GM12878 (cell line): ENCODE measurements at regions of chr14 and their contacts with region 1.

Region 1: DNA sequence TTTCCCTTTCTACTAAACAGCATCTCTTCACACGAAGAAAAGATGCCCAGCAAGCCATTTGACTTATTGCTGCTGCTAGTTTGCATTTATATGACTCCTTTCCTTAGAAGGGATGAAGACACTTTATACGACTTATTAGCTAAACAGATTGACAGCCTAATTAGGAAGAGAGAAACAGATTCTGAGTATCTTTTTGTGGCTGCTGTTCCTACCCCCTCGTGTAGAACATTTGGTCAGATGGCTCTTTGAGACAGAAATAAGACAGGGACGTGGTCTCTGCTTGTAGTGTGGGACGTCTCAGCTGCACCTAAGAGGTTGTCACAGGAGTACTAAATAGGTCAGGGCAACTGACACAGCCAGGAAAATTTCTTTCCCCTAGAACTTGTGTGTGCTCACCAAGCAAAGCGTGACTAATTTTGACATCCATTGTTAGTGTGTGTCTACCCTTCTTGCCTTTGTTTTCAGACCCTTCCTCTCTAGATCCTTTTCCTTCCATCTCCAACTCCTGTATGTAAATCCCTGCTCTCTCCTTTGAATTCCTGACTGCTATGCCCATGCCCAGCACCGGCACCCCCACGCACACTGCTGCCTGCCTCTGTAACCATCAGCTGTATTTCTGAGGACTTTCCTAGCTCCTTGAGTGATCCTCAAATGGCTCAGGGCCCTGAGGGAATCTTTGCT is 83.2 kb downstream of the DAD1 start:
- DNase-seq: no peak
- ATAC-seq: peak; percentile 29
- H3K4me3 ChIP-seq: peak overlapping the region; percentile 68
- H3K27ac ChIP-seq: peak overlapping the region; percentile 98
- H3K4me1 ChIP-seq: peaks cover 50% of the 10 kb centered on the region
- H3K27me3 ChIP-seq: no peaks in the 10 kb centered on the region
- CTCF ChIP-seq: no peak
- EP300 ChIP-seq: peak in 1 of 2 experiments; percentile 49; a peak in 1 of 4 replicates
- POLR2A ChIP-seq: peak; percentile 60; the same call in 1 of the 2 replicates
- RAD21 ChIP-seq: 0 out of 2 replicates have a peak, but pooled peaks have one; percentile 8

Region 2: DNA sequence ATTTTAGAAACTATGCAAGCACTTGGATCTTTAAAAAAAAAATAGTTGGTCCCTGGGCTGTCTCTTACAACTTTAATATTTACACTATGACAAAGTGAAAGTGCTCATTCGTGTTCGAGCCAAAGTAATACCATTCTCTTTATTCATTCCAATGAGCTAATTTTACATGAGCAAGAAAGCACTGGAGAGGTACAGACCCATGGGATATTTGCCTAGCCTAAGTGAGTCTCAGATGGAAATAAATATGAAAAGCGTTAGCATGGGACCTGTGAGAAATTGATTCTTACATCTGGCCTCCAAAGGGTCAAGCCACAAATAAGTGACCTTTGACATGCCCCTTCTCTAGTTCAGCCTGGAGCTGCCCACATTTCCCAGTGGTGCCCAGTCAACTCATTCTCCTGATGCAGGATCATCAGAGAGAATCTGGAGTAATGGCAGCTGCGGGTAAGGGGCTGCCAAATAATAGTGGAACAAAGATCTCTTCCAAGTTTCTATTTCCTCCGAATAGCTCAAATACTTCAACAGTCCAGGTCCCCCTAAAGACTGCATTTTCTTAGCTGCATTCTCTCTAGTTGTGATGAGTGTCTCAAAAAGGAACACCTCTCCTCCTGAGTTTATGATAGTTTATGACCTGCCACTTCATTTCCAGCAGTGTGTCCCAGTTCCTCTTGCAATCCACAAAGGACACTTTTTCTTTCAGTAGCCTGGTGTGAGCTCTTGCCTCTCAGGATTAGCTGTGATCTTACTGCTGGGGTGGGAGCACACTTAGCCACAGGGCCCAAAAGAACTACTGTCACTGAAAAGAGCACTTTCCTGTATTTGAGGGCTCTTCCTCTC is 125.0 kb before region 1 on chr14:
- CTCF ChIA-PET with region 1: interaction called, 7 read pairs
- POLR2A ChIA-PET with region 1: interaction called, 10 read pairs
- RAD21 ChIA-PET with region 1: interaction called, 13 read pairs
- SMC1A ChIA-PET with region 1: interaction called, 15 read pairs
- in situ Hi-C with region 1: no loop called
- intact Hi-C with region 1: no loop called
- DNase-seq: no peak
- ATAC-seq: no peak
- H3K4me3 ChIP-seq: no peak overlapping the region
- H3K27ac ChIP-seq: no peak overlapping the region
- H3K4me1 ChIP-seq: peaks cover 39% of the 10 kb centered on the region
- H3K27me3 ChIP-seq: no peaks in the 10 kb centered on the region
- CTCF ChIP-seq: no peak
- EP300 ChIP-seq: no peak
- POLR2A ChIP-seq: no peak
- RAD21 ChIP-seq: no peak

Region 3: GRCh38 chr14:22483863-22484593 is 21.8 kb before region 1 on chr14:
- CTCF ChIA-PET with region 1: interaction called, 101 read pairs
- POLR2A ChIA-PET with region 1: interaction called, 875 read pairs
- RAD21 ChIA-PET with region 1: interaction called, 797 read pairs
- SMC1A ChIA-PET with region 1: interaction called, 357 read pairs
- in situ Hi-C with region 1: no loop called
- intact Hi-C with region 1: loop called (anchors 1 kb)
- DNase-seq: no peak
- ATAC-seq: peak; percentile 39
- H3K4me3 ChIP-seq: peak overlapping the region; percentile 72
- H3K27ac ChIP-seq: peak overlapping the region; percentile 98
- H3K4me1 ChIP-seq: peaks cover 84% of the 10 kb centered on the region
- H3K27me3 ChIP-seq: no peaks in the 10 kb centered on the region
- CTCF ChIP-seq: no peak
- EP300 ChIP-seq: no peak
- POLR2A ChIP-seq: peak; percentile 52
- RAD21 ChIP-seq: no peak

Region 4: GRCh38 chr14:22519877-22520685 is 14.2 kb after region 1 on chr14:
- CTCF ChIA-PET with region 1: interaction called, 20 read pairs
- POLR2A ChIA-PET with region 1: interaction called, 875 read pairs
- RAD21 ChIA-PET with region 1: interaction called, 797 read pairs
- SMC1A ChIA-PET with region 1: interaction called, 399 read pairs
- in situ Hi-C with region 1: no loop called
- intact Hi-C with region 1: no loop called
- DNase-seq: no peak
- ATAC-seq: no peak
- H3K4me3 ChIP-seq: peak overlapping the region; percentile 15; the same call in 1 of the 2 replicates
- H3K27ac ChIP-seq: peak overlapping the region; percentile 80
- H3K4me1 ChIP-seq: peaks cover 99% of the 10 kb centered on the region
- H3K27me3 ChIP-seq: no peaks in the 10 kb centered on the region
- CTCF ChIP-seq: no peak
- EP300 ChIP-seq: no peak
- POLR2A ChIP-seq: no peak
- RAD21 ChIP-seq: no peak

Region 5: GRCh38 chr14:22536853-22537338 is 31.1 kb after region 1 on chr14:
- CTCF ChIA-PET with region 1: interaction called, 100 read pairs
- POLR2A ChIA-PET with region 1: interaction called, 339 read pairs
- RAD21 ChIA-PET with region 1: interaction called, 184 read pairs
- SMC1A ChIA-PET with region 1: interaction called, 399 read pairs
- in situ Hi-C with region 1: no loop called
- intact Hi-C with region 1: loop called (anchors 1 kb)
- DNase-seq: peak; percentile 94
- ATAC-seq: peak; percentile 75
- H3K4me3 ChIP-seq: peak overlapping the region; percentile 41; the same call in 1 of the 2 replicates
- H3K27ac ChIP-seq: peak overlapping the region; percentile 97
- H3K4me1 ChIP-seq: peaks cover 73% of the 10 kb centered on the region
- H3K27me3 ChIP-seq: no peaks in the 10 kb centered on the region
- CTCF ChIP-seq: no peak
- EP300 ChIP-seq: peak; percentile 75 to 82; a peak in 3 of 4 replicates
- POLR2A ChIP-seq: peak; percentile 59
- RAD21 ChIP-seq: peak; percentile 35; the same call in 1 of the 2 replicates

Region 6: DNA sequence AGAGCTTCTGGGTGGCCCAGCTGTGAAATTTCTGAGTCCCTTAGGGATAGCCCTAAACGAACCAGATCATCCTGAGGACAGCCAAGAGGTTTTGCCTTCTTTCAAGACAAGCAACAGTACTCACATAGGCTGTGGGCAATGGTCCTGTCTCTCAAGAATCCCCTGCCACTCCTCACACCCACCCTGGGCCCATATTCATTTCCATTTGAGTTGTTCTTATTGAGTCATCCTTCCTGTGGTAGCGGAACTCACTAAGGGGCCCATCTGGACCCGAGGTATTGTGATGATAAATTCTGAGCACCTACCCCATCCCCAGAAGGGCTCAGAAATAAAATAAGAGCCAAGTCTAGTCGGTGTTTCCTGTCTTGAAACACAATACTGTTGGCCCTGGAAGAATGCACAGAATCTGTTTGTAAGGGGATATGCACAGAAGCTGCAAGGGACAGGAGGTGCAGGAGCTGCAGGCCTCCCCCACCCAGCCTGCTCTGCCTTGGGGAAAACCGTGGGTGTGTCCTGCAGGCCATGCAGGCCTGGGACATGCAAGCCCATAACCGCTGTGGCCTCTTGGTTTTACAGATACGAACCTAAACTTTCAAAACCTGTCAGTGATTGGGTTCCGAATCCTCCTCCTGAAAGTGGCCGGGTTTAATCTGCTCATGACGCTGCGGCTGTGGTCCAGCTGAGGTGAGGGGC is 44.3 kb after region 1 on chr14:
- CTCF ChIA-PET with region 1: interaction called, 22 read pairs
- POLR2A ChIA-PET with region 1: interaction called, 43 read pairs
- RAD21 ChIA-PET with region 1: interaction called, 64 read pairs
- SMC1A ChIA-PET with region 1: interaction called, 82 read pairs
- in situ Hi-C with region 1: no loop called
- intact Hi-C with region 1: loop called (anchors 1 kb)
- DNase-seq: peak; percentile 87
- ATAC-seq: peak; percentile 85
- H3K4me3 ChIP-seq: no peak overlapping the region; the same call in 1 of the 2 replicates
- H3K27ac ChIP-seq: peak overlapping the region; percentile 97
- H3K4me1 ChIP-seq: peaks cover 61% of the 10 kb centered on the region
- H3K27me3 ChIP-seq: no peaks in the 10 kb centered on the region
- CTCF ChIP-seq: no peak
- EP300 ChIP-seq: peak; percentile 60 to 82; a peak in 2 of 4 replicates
- POLR2A ChIP-seq: peak; percentile 53; the same call in 1 of the 2 replicates
- RAD21 ChIP-seq: no peak; the same call in 1 of the 2 replicates

Region 7: DNA sequence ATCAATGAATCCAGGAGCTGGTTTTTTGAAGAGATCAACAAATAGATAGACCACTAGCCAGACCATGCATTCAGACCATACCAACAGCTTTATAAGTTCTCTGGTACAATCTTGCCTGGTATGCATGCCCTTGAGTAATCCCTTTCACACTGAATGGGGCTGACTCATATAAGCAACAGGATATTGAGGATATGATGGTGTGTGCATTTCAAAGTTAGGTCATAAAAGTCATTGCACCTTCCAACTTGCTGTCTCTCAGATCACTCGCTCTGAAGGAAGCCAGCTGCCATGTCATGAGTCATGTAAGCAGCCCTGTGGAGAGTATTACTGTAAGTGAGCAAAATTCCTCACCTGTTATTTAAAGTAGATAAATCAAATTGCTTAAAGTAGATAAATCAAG is 183.3 kb after region 1 on chr14:
- CTCF ChIA-PET with region 1: no interaction called
- POLR2A ChIA-PET with region 1: no interaction called
- RAD21 ChIA-PET with region 1: no interaction called
- SMC1A ChIA-PET with region 1: no interaction called
- in situ Hi-C with region 1: no loop called
- intact Hi-C with region 1: no loop called
- DNase-seq: no peak
- ATAC-seq: peak; percentile 50
- H3K4me3 ChIP-seq: no peak overlapping the region
- H3K27ac ChIP-seq: no peak overlapping the region
- H3K4me1 ChIP-seq: no peaks in the 10 kb centered on the region
- H3K27me3 ChIP-seq: no peaks in the 10 kb centered on the region; a peak in 1 of 4 replicates
- CTCF ChIP-seq: no peak
- EP300 ChIP-seq: no peak
- POLR2A ChIP-seq: no peak
- RAD21 ChIP-seq: no peak

Region 8: GRCh38 chr14:22918804-22919600 is 413.2 kb after region 1 on chr14 and contains the start of gene RBM23:
- CTCF ChIA-PET with region 1: no interaction called
- POLR2A ChIA-PET with region 1: no interaction called
- RAD21 ChIA-PET with region 1: no interaction called
- SMC1A ChIA-PET with region 1: no interaction called
- in situ Hi-C with region 1: no loop called
- intact Hi-C with region 1: no loop called
- DNase-seq: peak; percentile 100
- ATAC-seq: peak; percentile 98
- H3K4me3 ChIP-seq: peak within 1 kb of the TSS; percentile 96
- H3K27ac ChIP-seq: peak within 1 kb of the TSS; percentile 97
- H3K4me1 ChIP-seq: peaks cover 8% of the 10 kb centered on the region
- H3K27me3 ChIP-seq: no peaks in the 10 kb centered on the region
- CTCF ChIP-seq: no peak
- EP300 ChIP-seq: no peak
- POLR2A ChIP-seq: peak; percentile 87
- RAD21 ChIP-seq: no peak
- polyA plus RNA-seq, gene RBM23: 60.7 to 65.7 TPM